ENCODE measurements at regions of chr7 and their contacts with region 1.

Region 1: DNA sequence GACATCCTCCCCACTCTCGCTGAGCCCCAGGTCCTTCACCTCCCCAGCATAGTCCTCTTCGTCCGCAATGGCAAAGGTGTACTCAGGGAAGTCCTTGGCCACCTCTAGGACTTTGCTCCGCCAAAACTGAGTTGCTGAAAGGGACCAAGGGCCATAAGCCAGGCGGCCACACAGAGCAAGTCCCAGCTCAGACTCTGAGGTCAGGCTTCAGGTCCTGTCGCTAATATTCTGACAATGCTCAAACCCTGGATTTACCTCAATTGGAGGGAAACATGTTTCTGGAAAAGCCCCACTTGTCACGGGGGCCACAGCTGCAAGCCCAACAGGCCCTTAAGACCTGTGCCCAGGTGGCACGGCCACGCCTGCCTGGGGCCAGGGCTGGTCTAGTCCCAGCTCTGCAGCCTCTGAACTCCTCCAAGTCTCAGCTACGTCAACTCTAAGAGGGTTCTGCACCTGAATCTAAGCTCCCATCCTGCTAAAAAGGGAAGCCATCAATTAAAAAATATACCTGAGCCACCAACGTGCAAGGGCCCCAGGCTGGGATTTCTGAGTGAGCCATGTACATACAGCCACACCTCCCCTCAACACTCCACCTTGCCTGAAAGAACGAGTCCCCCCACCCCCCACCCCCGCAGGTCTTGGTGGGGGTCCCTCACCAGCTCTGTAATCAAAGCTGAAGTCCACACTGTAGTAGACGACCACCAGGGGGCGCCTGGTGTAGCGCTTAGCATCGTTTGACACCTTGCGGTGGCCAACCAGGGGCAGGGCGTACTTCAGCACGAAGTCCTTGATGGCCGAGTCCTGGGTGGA is 22.9 kb downstream of the PDIA4 start:
- DNase-seq: peak; percentile 29 to 96 (median 76)

Region 2: DNA sequence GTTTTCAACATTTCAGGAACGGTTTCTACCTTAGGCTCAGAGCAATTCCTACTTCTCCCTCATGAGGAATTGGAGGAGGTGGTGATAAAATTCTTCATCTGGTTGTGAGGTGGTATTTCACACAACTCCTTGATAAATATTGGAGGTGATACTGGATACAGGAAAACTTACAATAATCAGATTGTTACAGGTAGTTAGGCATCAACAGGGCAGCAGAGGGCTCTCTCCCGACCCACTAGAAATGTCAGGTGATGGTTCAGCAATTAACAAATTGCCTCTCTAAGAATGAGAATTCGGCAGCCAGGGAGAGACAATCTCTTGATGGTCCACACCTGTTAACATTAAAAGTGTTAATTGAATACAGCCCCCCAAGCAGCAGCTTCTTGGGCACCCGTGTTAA is 62.4 kb after region 1 on chr7:
- intact Hi-C with region 1: loop called (anchors 1 kb)
- DNase-seq: no peak

Measured in posterior cingulate gyrus (tissue), 11 donors.